A549 (cell line): ENCODE measurements at regions of chr1 and their contacts with region 1.

Region 1: GRCh38 chr1:39919545-39919944 is 17.8 kb upstream of the MYCL start:
- DNase-seq: peak; percentile 62 to 71
- ATAC-seq: peak; percentile 96 to 99
- H3K4me3 ChIP-seq: no peak overlapping the region
- H3K27ac ChIP-seq: no peak overlapping the region
- H3K4me1 ChIP-seq: no peaks in the 10 kb centered on the region
- CTCF ChIP-seq: peak; percentile 67
- EP300 ChIP-seq: no peak
- POLR2A ChIP-seq: no peak
- RAD21 ChIP-seq: peak; percentile 82 to 84

Region 2: DNA sequence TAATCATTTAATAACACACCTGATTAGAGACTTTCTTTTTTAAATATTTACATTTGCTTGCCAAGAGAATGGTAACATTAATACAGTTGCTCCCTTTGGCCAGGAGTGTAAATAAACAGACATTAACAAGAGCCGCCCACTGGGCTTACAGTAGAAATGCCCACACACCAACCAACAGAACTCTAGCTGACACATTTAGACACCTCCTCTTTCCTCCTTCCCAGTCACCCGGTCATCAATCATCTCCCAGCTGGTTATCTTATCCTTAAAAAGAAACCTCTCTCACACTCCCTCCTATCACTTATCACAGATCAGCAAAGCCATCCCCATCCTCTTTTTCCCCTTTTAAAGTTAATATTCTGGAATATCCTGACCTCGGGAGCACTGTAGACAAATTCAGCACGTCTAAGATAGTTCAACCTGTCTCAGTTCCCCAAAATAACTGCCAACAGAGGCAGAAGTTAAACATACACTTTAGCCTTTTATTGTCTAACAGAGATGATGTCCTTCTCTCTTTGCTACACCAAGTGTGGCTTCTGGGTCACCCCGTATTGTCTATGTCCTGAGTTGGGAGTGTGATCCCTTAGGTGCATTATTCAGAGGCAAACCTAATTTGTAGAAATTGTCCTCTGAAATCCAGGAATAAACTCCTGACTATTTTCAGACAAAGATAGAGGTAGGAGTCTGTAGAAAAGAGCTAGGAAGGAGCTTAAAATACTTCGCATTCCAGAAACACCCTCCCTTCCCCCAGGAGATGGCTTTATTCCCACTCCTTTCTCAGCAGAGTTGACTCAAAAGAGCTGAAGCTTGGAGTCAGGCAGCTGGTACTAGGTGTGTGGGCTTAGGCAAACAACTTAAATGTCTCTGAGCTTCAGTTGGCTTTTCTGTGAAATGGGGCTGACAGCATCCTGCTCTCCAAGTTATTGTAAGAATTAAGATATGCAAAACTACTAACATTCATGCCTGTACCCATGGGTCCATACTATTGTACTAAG is 26.6 kb before region 1 on chr1:
- CTCF ChIA-PET with region 1: interaction called, 11 read pairs
- POLR2A ChIA-PET with region 1: no interaction called
- DNase-seq: peak; percentile 22 to 51
- ATAC-seq: peak; percentile 80 to 82
- H3K4me3 ChIP-seq: 0 out of 3 replicates have a peak overlapping the region, but pooled peaks have one; percentile 18
- H3K27ac ChIP-seq: peak overlapping the region; percentile 35 to 55; a peak in 5 of 6 replicates
- H3K4me1 ChIP-seq: peaks cover 27% of the 10 kb centered on the region
- CTCF ChIP-seq: no peak
- EP300 ChIP-seq: no peak
- POLR2A ChIP-seq: no peak
- RAD21 ChIP-seq: no peak

Region 3: DNA sequence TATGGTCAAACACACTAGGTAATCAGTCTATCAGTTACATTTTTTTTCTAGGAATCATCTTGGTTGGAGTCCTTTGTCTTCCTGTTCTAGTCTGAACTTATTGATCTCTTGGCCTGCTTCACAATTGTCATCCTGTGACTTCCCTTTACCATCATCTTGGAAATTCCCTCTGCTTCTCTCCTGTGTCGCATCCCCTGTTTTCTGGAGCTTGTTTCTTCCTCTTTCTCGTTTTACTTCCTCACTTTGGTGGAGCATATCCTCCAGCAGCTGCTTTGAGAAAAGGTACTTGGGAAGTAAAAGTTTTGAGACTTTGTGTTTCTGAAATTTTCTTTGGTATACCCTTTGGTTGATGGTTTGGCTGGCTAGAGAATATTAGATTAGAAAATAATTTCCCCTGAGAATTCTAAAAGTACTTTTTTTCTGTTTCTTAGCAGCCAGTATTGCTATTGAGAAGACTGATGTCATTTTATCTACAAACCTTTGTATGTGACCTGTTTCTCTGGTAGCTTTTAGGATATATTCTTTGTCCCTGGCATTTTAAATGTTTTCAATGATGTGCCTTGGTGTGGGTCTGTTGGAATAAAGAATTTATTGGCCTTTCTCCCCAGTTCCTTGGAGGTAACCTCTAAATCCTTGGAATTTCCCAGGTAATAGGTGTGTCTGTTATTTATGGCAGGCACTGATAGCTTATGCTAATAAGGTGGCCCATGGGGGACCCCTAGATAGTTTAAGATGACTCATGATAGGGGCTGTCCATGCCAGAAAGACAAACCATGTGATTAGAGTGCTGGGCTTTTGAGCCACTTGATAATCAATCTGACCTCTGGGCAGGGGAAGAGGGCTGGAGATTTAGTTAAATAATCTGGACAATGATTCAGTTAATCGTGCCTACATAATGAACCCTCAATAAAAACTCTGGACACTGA is 11.8 kb before region 1 on chr1:
- CTCF ChIA-PET with region 1: interaction called, 14 read pairs
- POLR2A ChIA-PET with region 1: no interaction called
- DNase-seq: no peak
- ATAC-seq: no peak
- H3K4me3 ChIP-seq: no peak overlapping the region
- H3K27ac ChIP-seq: no peak overlapping the region
- H3K4me1 ChIP-seq: no peaks in the 10 kb centered on the region
- CTCF ChIP-seq: no peak
- EP300 ChIP-seq: no peak
- POLR2A ChIP-seq: no peak
- RAD21 ChIP-seq: no peak

Region 4: GRCh38 chr1:39947260-39947659 is 27.7 kb after region 1 on chr1:
- CTCF ChIA-PET with region 1: interaction called, 16 read pairs
- POLR2A ChIA-PET with region 1: interaction called, 12 read pairs
- DNase-seq: no peak
- ATAC-seq: no peak
- H3K4me3 ChIP-seq: no peak overlapping the region
- H3K27ac ChIP-seq: no peak overlapping the region
- H3K4me1 ChIP-seq: no peaks in the 10 kb centered on the region
- CTCF ChIP-seq: no peak
- EP300 ChIP-seq: no peak
- POLR2A ChIP-seq: no peak
- RAD21 ChIP-seq: no peak

Region 5: GRCh38 chr1:39960431-39960958 is 41.0 kb after region 1 on chr1:
- CTCF ChIA-PET with region 1: interaction called, 39 read pairs
- POLR2A ChIA-PET with region 1: no interaction called
- DNase-seq: no peak
- ATAC-seq: no peak
- H3K4me3 ChIP-seq: no peak overlapping the region
- H3K27ac ChIP-seq: no peak overlapping the region
- H3K4me1 ChIP-seq: peaks cover 7% of the 10 kb centered on the region; the same call in 2 of the 3 replicates
- CTCF ChIP-seq: no peak
- EP300 ChIP-seq: no peak
- POLR2A ChIP-seq: no peak
- RAD21 ChIP-seq: no peak

Region 6: DNA sequence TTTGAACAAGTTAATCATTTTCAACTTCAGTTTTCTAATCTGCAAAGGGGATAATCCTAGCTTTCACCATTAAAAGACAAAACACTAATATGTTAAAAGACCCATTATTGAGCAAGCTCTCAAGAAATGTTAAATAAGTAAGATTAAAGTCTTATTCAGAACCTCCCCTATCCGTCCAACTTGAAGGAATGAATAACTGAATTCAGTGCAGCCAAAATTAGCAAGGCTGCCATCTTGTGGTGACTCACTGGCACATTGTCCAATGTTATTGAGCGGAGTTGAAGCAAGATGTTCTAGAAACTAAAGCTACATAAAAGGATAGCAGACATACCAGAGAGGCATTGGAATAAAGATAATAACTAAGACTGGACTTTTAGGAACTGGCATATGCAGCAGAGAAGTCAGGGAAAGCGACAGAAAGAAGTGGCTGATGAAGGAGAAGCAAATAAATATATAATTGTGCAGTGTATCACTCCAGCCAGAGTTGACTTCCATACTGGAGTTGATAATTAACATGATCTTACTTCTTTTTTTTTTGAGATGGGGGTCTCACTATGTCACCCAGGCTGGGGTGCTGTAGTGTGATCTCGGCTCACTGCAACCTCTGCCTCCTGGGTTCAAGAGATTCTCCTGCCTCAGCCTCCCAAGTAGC is 112.8 kb after region 1 on chr1:
- CTCF ChIA-PET with region 1: interaction called, 121 read pairs
- POLR2A ChIA-PET with region 1: no interaction called
- DNase-seq: peak; percentile 40 to 57
- ATAC-seq: peak; percentile 73 to 85; a peak in 4 of 6 replicates
- H3K4me3 ChIP-seq: no peak overlapping the region
- H3K27ac ChIP-seq: no peak overlapping the region
- H3K4me1 ChIP-seq: no peaks in the 10 kb centered on the region
- CTCF ChIP-seq: peak; percentile 67
- EP300 ChIP-seq: no peak
- POLR2A ChIP-seq: no peak
- RAD21 ChIP-seq: peak; percentile 52 to 58